ENCODE measurements at regions of chr14 and their contacts with region 1.

Region 1: DNA sequence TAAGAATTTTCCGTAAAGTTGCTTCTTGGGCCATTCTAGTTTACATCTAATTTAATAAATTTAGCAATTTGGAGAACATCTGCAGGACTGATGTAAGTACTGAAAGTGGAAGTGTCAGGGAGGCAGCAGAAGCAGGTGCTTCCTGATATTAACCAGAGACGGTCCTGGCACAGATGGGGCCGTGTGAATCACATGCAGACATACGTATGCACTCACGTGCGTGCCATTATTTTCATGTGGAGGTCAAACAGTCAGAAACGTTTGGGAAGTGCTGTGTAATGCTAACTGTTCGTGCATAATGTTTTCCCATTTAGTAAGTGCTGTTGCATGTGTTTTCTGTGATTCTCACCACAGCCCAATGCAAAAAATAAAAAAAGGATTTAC is 87.8 kb upstream of the DYNC1H1 start:
- DNase-seq: peak; percentile 60
- ATAC-seq: peak; percentile 84
- H3K4me3 Mint-ChIP-seq: peak overlapping the region; percentile 72
- H3K27ac Mint-ChIP-seq: peak overlapping the region; percentile 96
- H3K4me1 Mint-ChIP-seq: peaks cover 84% of the 10 kb centered on the region
- H3K27me3 Mint-ChIP-seq: no peaks in the 10 kb centered on the region
- CTCF ChIP-seq: no peak

Region 2: GRCh38 chr14:101761032-101761880 is 115.3 kb before region 1 on chr14 and contains the start of gene PPP2R5C:
- CTCF ChIA-PET with region 1: no interaction called
- POLR2A ChIA-PET with region 1: interaction called, 7 read pairs
- intact Hi-C with region 1: loop called (anchors 1 kb)
- DNase-seq: peak; percentile 81
- ATAC-seq: peak; percentile 63
- H3K4me3 Mint-ChIP-seq: peak within 1 kb of the TSS; percentile 88
- H3K27ac Mint-ChIP-seq: peak within 1 kb of the TSS; percentile 77
- H3K4me1 Mint-ChIP-seq: peaks cover 18% of the 10 kb centered on the region
- H3K27me3 Mint-ChIP-seq: no peaks in the 10 kb centered on the region
- CTCF ChIP-seq: no peak
- total RNA-seq, gene PPP2R5C: 197 and 227 TPM in 2 replicates

Region 3: GRCh38 chr14:101823511-101824120 is 52.9 kb before region 1 on chr14:
- CTCF ChIA-PET with region 1: no interaction called
- POLR2A ChIA-PET with region 1: interaction called, 10 read pairs
- intact Hi-C with region 1: loop called (anchors 1 kb)
- DNase-seq: no peak
- ATAC-seq: peak; percentile 31
- H3K4me3 Mint-ChIP-seq: peak overlapping the region; percentile 80
- H3K27ac Mint-ChIP-seq: peak overlapping the region; percentile 99
- H3K4me1 Mint-ChIP-seq: peaks cover 91% of the 10 kb centered on the region
- H3K27me3 Mint-ChIP-seq: no peaks in the 10 kb centered on the region
- CTCF ChIP-seq: no peak

Region 4: GRCh38 chr14:101849125-101849524 is 27.4 kb before region 1 on chr14:
- CTCF ChIA-PET with region 1: interaction called, 8 read pairs
- POLR2A ChIA-PET with region 1: interaction called, 27 read pairs
- intact Hi-C with region 1: loop called (anchors 1 kb)
- DNase-seq: no peak
- ATAC-seq: peak; percentile 67
- H3K4me3 Mint-ChIP-seq: peak overlapping the region; percentile 60
- H3K27ac Mint-ChIP-seq: peak overlapping the region; percentile 38
- H3K4me1 Mint-ChIP-seq: peaks cover 88% of the 10 kb centered on the region
- H3K27me3 Mint-ChIP-seq: no peaks in the 10 kb centered on the region
- CTCF ChIP-seq: no peak

Region 5: DNA sequence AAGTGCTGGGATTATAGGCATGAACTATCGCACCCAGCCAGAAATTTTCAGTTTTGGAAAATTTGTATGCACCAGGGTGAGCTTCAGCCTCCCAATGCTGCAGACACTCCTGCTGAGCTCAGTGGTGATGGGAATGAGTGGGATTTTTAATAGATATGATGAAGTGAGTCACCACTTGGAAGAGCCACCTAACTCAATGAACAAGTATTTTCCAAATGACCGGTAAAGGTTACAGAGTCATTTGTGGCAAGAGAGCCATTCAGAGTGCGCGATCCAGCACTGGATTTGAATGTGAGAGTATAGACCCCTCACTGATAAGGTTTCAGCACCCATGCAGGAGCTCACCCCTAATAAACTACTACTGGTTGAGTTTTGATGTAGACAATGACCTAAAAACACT is 14.4 kb before region 1 on chr14:
- CTCF ChIA-PET with region 1: no interaction called
- POLR2A ChIA-PET with region 1: no interaction called
- intact Hi-C with region 1: no loop called
- DNase-seq: no peak
- ATAC-seq: no peak
- H3K4me3 Mint-ChIP-seq: no peak overlapping the region
- H3K27ac Mint-ChIP-seq: no peak overlapping the region
- H3K4me1 Mint-ChIP-seq: peaks cover 16% of the 10 kb centered on the region
- H3K27me3 Mint-ChIP-seq: no peaks in the 10 kb centered on the region
- CTCF ChIP-seq: no peak

Measured in activated B cell treated with CpG ODN at 0.5 μM for 24 hours (primary cell).